A549 (cell line): ENCODE measurements at regions of chrX and their contacts with region 1.

Region 1: DNA sequence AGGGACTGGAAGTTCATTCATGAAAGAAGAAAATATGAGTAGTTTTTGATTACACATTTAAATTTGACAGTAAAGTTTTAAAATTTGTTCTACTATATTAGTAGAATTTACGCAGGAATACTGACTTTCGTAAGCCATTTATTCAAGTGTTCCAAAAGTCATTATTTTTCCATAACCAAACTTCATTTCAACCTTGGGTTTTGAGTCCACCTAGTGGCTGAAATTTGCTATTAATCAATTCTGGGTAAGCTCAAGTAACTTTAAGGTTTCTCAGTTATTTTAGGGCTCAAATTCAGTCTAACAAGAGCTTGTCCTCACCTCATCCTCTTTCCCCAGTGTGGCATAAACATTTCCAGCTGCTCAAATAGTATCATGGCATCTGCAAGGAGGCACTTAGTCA is 175.4 kb downstream of the SH3BGRL start:
- DNase-seq: peak; percentile 1 to 26
- ATAC-seq: peak in 1 of 2 experiments; percentile 47; a peak in 2 of 6 replicates
- H3K4me3 ChIP-seq: no peak overlapping the region
- H3K27ac ChIP-seq: no peak overlapping the region
- H3K4me1 ChIP-seq: no peaks in the 10 kb centered on the region
- CTCF ChIP-seq: peak; percentile 50
- EP300 ChIP-seq: no peak
- POLR2A ChIP-seq: no peak
- RAD21 ChIP-seq: peak; percentile 56 to 62

Region 2: GRCh38 chrX:81208410-81208809 is 168.9 kb before region 1 on chrX:
- CTCF ChIA-PET with region 1: no interaction called
- POLR2A ChIA-PET with region 1: no interaction called
- DNase-seq: no peak
- ATAC-seq: no peak
- H3K4me3 ChIP-seq: no peak overlapping the region
- H3K27ac ChIP-seq: no peak overlapping the region
- H3K4me1 ChIP-seq: peaks cover 2% of the 10 kb centered on the region; the same call in 1 of the 3 replicates
- CTCF ChIP-seq: no peak
- EP300 ChIP-seq: no peak
- POLR2A ChIP-seq: no peak
- RAD21 ChIP-seq: no peak

Region 3: GRCh38 chrX:81390237-81390636 is 12.9 kb after region 1 on chrX:
- CTCF ChIA-PET with region 1: interaction called, 11 read pairs
- POLR2A ChIA-PET with region 1: no interaction called
- DNase-seq: no peak
- ATAC-seq: no peak
- H3K4me3 ChIP-seq: no peak overlapping the region
- H3K27ac ChIP-seq: no peak overlapping the region
- H3K4me1 ChIP-seq: no peaks in the 10 kb centered on the region
- CTCF ChIP-seq: no peak
- EP300 ChIP-seq: no peak
- POLR2A ChIP-seq: no peak
- RAD21 ChIP-seq: no peak